SK-N-SH (cell line): ENCODE measurements at regions of chr15 and their contacts with region 1.

Region 1: DNA sequence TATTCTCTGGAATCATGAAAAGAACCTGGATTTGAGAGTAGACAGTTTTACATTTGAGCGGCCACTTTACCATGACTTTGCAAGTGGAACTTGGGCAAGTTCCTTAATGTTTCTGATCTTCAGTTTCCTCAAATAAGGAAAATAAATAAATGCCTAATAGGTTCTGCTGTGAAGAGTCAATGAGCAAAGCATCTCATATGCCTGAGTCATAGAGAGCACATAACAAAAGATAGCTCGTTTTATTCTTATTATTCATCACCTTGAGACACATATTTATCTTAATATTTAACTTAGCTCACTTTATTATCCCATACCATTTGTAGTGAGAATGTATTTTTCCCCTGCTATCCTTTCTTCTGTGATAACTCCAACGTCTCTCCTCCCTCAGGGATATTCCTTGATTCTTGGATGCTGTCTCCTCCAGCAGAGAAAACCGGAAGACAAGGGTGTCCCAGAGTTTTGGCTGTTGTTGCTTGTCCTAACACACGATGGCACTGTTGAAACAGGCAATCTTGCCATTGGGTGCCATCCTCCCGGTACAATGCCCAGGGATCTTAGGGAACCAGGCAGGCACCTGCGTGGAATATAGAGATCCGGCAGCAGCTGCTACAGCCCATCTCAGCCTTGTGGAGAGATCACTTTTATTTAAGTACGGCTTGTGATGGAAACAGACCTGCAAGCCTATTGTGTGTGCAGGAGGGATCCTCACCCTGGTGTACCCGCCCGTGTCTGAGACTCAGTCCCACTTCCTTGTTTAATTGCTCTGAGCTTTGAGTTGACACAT is 33.3 kb upstream of the VPS33B start:
- DNase-seq: peak; percentile 84
- H3K4me3 ChIP-seq: no peak overlapping the region
- H3K27ac ChIP-seq: no peak overlapping the region
- H3K4me1 ChIP-seq: peaks cover 0 to 3% of the 10 kb centered on the region in 2 experiments; a peak in 1 of 4 replicates
- H3K27me3 ChIP-seq: peaks cover 36% of the 10 kb centered on the region; the same call in 1 of the 2 replicates
- CTCF ChIP-seq: peak; percentile 78
- EP300 ChIP-seq: no peak
- RAD21 ChIP-seq: peak; percentile 96

Region 2: GRCh38 chr15:90845201-90845949 is 210.4 kb before region 1 on chr15:
- CTCF ChIA-PET with region 1: no interaction called
- POLR2A ChIA-PET with region 1: no interaction called
- DNase-seq: no peak
- H3K4me3 ChIP-seq: no peak overlapping the region
- H3K27ac ChIP-seq: peak overlapping the region in 1 of 2 experiments; percentile 64; a peak in 2 of 4 replicates
- H3K4me1 ChIP-seq: peaks cover 5 to 9% of the 10 kb centered on the region in 2 experiments; a peak in 2 of 4 replicates
- H3K27me3 ChIP-seq: no peaks in the 10 kb centered on the region
- CTCF ChIP-seq: no peak
- EP300 ChIP-seq: peak in 1 of 2 experiments; percentile 20; a peak in 1 of 4 replicates
- RAD21 ChIP-seq: no peak

Region 3: DNA sequence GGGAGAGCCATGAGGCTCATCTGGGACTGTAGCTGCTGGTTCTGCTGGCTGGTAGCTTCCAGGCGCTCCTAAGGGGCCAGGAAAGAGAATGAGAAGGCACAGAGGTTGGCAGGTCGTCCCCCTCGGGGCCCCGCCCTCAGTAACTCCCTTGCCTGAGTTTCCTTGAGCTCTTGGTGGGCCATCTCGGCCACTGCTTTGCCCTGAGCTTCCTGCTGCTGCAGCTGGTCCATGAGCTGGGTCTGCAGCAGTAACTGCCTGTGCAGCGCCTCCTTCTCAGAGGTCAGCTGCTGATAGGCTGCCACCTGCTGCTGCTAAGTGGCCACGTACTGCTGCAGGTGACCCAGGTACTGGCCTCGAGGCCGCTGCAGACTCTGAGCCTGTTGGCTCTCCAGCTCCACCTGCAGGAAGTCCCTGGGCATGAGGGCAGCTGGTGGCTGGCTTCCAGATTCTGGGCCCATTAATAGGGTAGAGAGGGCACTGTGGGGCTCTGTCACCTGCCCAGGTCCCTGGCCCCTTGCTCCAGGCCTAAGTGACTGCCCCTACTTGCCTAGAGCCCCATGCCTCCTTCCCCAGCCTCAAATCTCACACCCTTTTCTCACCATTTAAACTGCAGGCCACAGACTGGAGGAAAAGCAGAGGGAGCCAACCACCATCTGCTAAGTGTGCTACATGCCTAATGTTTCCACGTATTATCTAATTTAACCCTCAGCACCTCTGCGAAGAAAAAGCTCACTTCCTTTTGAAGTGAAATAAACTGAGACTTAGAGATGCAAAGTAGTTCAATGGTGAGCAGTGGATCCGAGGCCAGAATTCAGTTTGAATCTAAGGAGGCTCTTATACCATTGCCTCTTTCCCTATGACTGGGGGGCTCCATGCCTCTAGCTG is 22.6 kb before region 1 on chr15:
- CTCF ChIA-PET with region 1: interaction called, 10 read pairs
- POLR2A ChIA-PET with region 1: no interaction called
- DNase-seq: peak; percentile 40
- H3K4me3 ChIP-seq: no peak overlapping the region
- H3K27ac ChIP-seq: no peak overlapping the region
- H3K4me1 ChIP-seq: no peaks in the 10 kb centered on the region; a peak in 1 of 4 replicates
- H3K27me3 ChIP-seq: 0 out of 2 replicates have a peak, but pooled peaks cover 7% of the 10 kb centered on the region
- CTCF ChIP-seq: peak; percentile 51
- EP300 ChIP-seq: no peak
- RAD21 ChIP-seq: peak; percentile 37

Region 4: GRCh38 chr15:91068966-91069365 is 13.2 kb after region 1 on chr15:
- CTCF ChIA-PET with region 1: interaction called, 19 read pairs
- POLR2A ChIA-PET with region 1: no interaction called
- DNase-seq: no peak
- H3K4me3 ChIP-seq: no peak overlapping the region
- H3K27ac ChIP-seq: no peak overlapping the region
- H3K4me1 ChIP-seq: peaks cover 0 to 7% of the 10 kb centered on the region in 2 experiments; a peak in 1 of 4 replicates
- H3K27me3 ChIP-seq: no peaks in the 10 kb centered on the region
- CTCF ChIP-seq: no peak
- EP300 ChIP-seq: no peak
- RAD21 ChIP-seq: no peak

Region 5: GRCh38 chr15:91224755-91225380 is 169.1 kb after region 1 on chr15:
- CTCF ChIA-PET with region 1: interaction called, 66 read pairs
- POLR2A ChIA-PET with region 1: no interaction called
- DNase-seq: peak; percentile 68
- H3K4me3 ChIP-seq: no peak overlapping the region; a peak in 1 of 4 replicates
- H3K27ac ChIP-seq: no peak overlapping the region
- H3K4me1 ChIP-seq: no peaks in the 10 kb centered on the region; a peak in 1 of 4 replicates
- H3K27me3 ChIP-seq: no peaks in the 10 kb centered on the region
- CTCF ChIP-seq: peak; percentile 69
- EP300 ChIP-seq: no peak
- RAD21 ChIP-seq: peak; percentile 84

Region 6: DNA sequence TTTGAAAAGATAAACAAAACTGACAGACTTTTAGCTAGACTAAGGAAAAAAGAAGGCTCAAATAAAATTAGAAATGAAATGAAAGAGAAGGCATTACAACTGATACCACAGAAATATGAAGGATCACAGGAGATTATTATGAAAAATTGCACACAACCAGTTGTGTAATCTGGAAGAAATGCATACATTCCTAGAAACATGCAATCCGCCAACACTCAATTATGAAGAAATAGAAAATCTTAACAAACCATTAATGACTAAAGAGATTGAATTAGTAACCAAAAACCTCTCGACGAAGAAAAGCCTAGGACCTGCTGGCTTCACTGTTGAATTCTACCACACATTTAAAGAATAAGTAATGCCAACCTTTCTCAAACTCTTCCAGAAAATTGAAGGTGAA is 193.9 kb after region 1 on chr15:
- CTCF ChIA-PET with region 1: interaction called, 25 read pairs
- POLR2A ChIA-PET with region 1: no interaction called
- DNase-seq: no peak
- H3K4me3 ChIP-seq: no peak overlapping the region
- H3K27ac ChIP-seq: no peak overlapping the region
- H3K4me1 ChIP-seq: peaks cover 0 to 2% of the 10 kb centered on the region in 2 experiments; a peak in 1 of 4 replicates
- H3K27me3 ChIP-seq: no peaks in the 10 kb centered on the region
- CTCF ChIP-seq: no peak
- EP300 ChIP-seq: no peak
- RAD21 ChIP-seq: no peak

Region 7: DNA sequence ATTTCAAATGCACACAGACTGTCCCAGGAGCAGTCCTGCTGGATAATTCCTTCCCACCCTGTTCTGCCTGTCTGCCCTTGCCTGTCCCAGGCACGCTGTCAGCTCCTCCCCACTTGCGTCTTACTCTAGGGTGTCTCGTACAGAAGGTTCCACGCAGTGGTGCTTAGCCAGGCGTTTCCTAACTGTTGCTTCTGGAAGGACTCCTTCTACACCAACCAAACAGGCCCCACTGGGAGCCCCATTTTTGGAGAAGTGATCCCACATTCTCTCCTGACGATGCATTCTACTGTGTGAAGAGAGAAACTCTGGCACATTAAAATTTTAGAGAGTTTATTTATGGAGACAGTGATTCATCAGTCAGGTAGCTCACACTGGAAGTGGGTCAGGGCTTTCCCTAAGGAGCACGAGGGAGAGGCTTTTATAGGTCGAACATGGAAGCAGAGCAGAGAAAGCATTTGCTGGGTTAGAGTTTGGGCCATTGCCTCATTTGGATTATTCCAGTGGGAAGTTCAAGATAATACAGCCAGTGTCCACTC is 208.3 kb after region 1 on chr15:
- CTCF ChIA-PET with region 1: interaction called, 43 read pairs
- POLR2A ChIA-PET with region 1: no interaction called
- DNase-seq: no peak
- H3K4me3 ChIP-seq: no peak overlapping the region
- H3K27ac ChIP-seq: no peak overlapping the region
- H3K4me1 ChIP-seq: no peaks in the 10 kb centered on the region
- H3K27me3 ChIP-seq: no peaks in the 10 kb centered on the region; the same call in 1 of the 2 replicates
- CTCF ChIP-seq: no peak
- EP300 ChIP-seq: no peak
- RAD21 ChIP-seq: no peak

Region 8: GRCh38 chr15:91278791-91279404 is 223.2 kb after region 1 on chr15:
- CTCF ChIA-PET with region 1: interaction called, 20 read pairs
- POLR2A ChIA-PET with region 1: no interaction called
- DNase-seq: no peak
- H3K4me3 ChIP-seq: no peak overlapping the region
- H3K27ac ChIP-seq: no peak overlapping the region
- H3K4me1 ChIP-seq: no peaks in the 10 kb centered on the region
- H3K27me3 ChIP-seq: no peaks in the 10 kb centered on the region
- CTCF ChIP-seq: no peak
- EP300 ChIP-seq: no peak
- RAD21 ChIP-seq: no peak